ENCODE measurements at regions of chr7 and their contacts with region 1.

Region 1: DNA sequence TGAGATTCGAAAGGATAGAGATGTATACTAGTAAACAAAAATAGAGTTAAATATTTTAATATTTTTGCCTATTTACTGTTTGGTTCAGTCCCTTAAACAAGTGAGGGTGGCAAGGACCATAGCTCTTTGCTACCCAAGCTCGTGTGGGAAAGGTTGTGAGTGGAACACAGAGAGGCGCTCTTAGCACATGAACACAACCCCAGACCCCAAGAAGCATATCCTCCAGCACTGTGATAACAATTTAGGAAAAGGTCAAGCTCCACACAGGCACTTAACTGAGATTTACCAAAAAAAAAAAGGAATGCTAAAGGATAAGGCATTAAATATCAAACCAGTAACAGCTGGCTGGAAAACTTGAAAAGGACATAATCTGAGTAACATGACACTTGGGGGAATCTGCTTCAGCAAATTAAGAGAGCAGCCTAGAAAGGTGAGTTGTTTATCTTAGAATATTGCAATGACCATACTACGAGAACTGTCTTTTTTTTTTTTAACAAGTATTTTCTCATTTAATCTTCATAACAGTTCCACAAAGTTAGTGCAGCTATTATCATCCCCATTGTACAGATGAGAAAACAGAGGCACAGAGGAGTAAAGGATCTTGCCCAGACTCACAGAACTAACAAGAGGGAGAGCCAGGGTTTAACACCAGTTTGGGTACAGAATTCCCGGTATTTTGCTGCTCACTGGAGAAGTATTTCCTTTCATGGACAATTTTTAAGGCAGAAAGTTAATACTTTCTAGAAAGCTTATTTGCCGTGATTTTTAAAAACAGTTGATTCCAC is 303.5 kb upstream of the AOAH start:
- DNase-seq: no peak
- ATAC-seq: no peak
- H3K4me3 ChIP-seq: no peak overlapping the region
- H3K27ac ChIP-seq: no peak overlapping the region
- H3K4me1 ChIP-seq: peaks cover 7% of the 10 kb centered on the region
- H3K27me3 ChIP-seq: no peaks in the 10 kb centered on the region
- CTCF ChIP-seq: no peak

Region 2: DNA sequence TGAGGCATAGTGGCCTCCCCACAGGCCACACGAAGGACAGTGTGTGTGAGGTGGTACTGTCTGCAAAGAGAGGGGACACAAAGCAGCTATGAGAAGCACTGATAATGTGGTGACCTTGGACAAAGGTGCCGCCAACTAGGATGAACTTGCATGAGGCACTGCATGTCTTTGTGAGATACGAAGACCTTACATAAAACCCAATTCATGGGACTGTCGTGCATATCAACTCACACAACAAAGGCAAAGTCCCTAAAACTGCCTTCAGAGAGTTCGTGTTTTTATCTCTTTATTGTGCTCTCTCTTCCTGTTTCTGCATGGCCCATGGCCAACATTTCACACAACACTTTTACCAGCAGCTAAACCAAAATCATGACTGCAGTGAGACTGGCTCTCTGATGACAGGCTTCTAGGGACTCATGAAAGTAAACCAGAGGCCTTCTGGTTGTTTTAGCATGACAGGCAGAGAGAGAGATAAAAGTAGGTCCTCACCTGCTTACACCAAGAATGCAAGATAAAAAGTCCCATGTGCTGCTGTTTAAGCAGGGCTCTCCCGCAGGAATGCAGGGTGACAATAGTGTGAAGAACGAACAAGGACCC is 73.1 kb after region 1 on chr7:
- intact Hi-C with region 1: no loop called
- DNase-seq: no peak
- ATAC-seq: no peak
- H3K4me3 ChIP-seq: no peak overlapping the region
- H3K27ac ChIP-seq: no peak overlapping the region
- H3K4me1 ChIP-seq: no peaks in the 10 kb centered on the region
- H3K27me3 ChIP-seq: no peaks in the 10 kb centered on the region
- CTCF ChIP-seq: no peak

Region 3: DNA sequence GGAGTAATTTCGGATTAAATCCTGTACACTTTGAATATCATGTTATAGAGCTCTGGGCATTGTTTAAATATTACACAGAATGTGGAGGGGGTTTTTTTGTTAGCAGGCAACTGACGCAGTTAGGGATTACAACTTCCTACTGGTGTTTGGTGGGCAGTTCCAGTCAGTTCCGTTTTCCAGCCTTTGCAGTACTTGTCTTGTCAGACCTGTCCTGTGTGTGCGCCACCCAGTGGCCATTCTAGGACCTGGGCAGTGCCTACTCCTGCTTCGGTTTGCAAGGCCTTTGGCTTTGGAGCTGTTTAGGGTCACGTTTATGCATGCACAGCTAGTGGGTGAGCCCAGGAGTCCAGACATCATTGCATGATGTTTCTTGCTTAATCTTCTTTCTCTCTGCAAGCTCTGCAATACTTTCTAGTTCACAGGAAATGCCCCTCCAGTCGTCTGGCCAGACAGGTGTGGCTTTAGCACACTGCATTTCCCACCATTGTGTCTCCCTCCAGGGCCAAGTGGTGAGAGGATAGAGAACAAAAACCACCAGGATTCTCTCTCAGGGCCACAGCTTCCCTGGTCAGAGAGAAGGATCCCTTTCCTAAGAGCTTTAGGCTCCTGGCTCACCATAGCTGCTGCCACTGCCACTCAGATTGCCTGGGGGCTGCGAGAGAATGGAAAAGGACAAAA is 1342.2 kb after region 1 on chr7:
- intact Hi-C with region 1: loop called in 1 of 2 experiments (anchors 5 kb)
- DNase-seq: peak; percentile 87 to 89
- ATAC-seq: peak; percentile 65 to 88 (median 83)
- H3K4me3 ChIP-seq: peak overlapping the region; percentile 44
- H3K27ac ChIP-seq: no peak overlapping the region
- H3K4me1 ChIP-seq: no peaks in the 10 kb centered on the region
- H3K27me3 ChIP-seq: no peaks in the 10 kb centered on the region
- CTCF ChIP-seq: peak; percentile 68